Breast epithelium (tissue), 4 donors: ENCODE measurements at regions of chr1 and their contacts with region 1.

Region 1: GRCh38 chr1:37931361-37932158 is 15.3 kb downstream of the INPP5B start:
- DNase-seq: peak; percentile 98 to 99
- H3K4me3 ChIP-seq: peak overlapping the region; percentile 70 to 90 (median 87)
- H3K27ac ChIP-seq: peak overlapping the region; percentile 70 to 84
- H3K4me1 ChIP-seq: no peaks in the 10 kb centered on the region
- H3K27me3 ChIP-seq: no peaks in the 10 kb centered on the region
- CTCF ChIP-seq: no peak
- POLR2A ChIP-seq: no peak

Region 2: GRCh38 chr1:37890378-37891014 is 41.1 kb before region 1 on chr1:
- intact Hi-C with region 1: no loop called
- DNase-seq: no peak
- H3K4me3 ChIP-seq: no peak overlapping the region
- H3K27ac ChIP-seq: no peak overlapping the region
- H3K4me1 ChIP-seq: no peaks in the 10 kb centered on the region
- H3K27me3 ChIP-seq: no peaks in the 10 kb centered on the region
- CTCF ChIP-seq: peak in 1 of 3 donors; percentile 53
- POLR2A ChIP-seq: no peak

Region 3: DNA sequence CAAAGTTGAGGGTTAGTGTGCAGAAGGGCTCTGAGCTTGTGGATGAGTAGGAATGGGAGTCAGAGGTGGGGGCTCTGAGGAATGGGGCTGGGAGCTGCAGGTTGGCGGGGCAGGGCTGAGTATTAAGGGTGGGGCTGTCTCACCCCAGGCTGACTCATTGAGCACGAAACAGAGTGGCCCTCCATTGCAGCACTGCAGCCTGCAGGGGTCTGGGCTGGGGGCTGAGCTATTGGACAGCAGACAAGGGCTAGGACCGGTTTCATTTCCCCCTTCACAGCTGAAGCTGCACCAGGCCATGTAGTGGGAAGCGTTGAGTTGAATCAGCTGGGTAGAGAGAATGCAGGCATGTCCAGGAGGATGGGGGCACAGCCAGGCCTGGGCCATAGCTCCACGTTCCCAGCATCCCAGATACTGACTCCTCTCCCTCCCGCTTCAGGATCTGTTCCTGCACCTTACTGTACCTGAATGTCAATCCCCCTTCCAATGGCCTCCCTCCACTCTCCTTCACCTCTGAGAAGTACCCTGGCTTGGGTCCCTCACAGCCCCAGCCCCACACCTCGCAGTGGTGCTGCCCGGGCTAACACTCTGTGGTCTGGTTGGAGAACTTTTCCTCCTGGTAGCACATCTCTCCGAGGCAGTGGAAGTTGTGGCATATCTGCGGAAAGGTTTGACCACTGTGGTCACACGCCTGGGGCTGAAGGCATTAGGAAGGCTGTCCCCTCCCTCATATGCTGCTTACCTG is 19.7 kb after region 1 on chr1:
- intact Hi-C with region 1: loop called (anchors 1 kb)
- DNase-seq: no peak
- H3K4me3 ChIP-seq: no peak overlapping the region
- H3K27ac ChIP-seq: no peak overlapping the region
- H3K4me1 ChIP-seq: no peaks in the 10 kb centered on the region
- H3K27me3 ChIP-seq: no peaks in the 10 kb centered on the region
- CTCF ChIP-seq: no peak
- POLR2A ChIP-seq: no peak